ENCODE measurements at regions of chr17 and their contacts with region 1.

Region 1: GRCh38 chr17:46193626-46194392 is 580 bp upstream of the KANSL1 start:
- DNase-seq: peak; percentile 90 to 96 (median 95)
- H3K4me3 ChIP-seq: peak overlapping the region; percentile 71
- H3K4me3 Mint-ChIP-seq: peak overlapping the region; percentile 79 to 94 (median 90)
- H3K27ac ChIP-seq: peak overlapping the region; percentile 96
- H3K27ac Mint-ChIP-seq: peak overlapping the region; percentile 92 to 99 (median 98)
- H3K4me1 ChIP-seq: peaks cover 65% of the 10 kb centered on the region
- H3K4me1 Mint-ChIP-seq: peaks cover 52 to 72% (median 66%) of the 10 kb centered on the region in 3 donors
- H3K27me3 ChIP-seq: no peaks in the 10 kb centered on the region
- H3K27me3 Mint-ChIP-seq: no peaks in the 10 kb centered on the region

Region 2: GRCh38 chr17:46044286-46044928 is 149.4 kb before region 1 on chr17:
- CTCF ChIA-PET with region 1: interaction called, 12 read pairs
- POLR2A ChIA-PET with region 1: interaction called, 17 read pairs
- DNase-seq: peak; percentile 28 to 61 (median 32)
- H3K4me3 ChIP-seq: no peak overlapping the region
- H3K4me3 Mint-ChIP-seq: no peak overlapping the region
- H3K27ac ChIP-seq: no peak overlapping the region
- H3K27ac Mint-ChIP-seq: peak overlapping the region; percentile 5 to 89 (median 62)
- H3K4me1 ChIP-seq: no peaks in the 10 kb centered on the region
- H3K4me1 Mint-ChIP-seq: peaks cover 22 to 27% (median 25%) of the 10 kb centered on the region in 3 donors
- H3K27me3 ChIP-seq: no peaks in the 10 kb centered on the region
- H3K27me3 Mint-ChIP-seq: peaks cover 0 to under 1% of the 10 kb centered on the region in 2 donors

Region 3: GRCh38 chr17:46121841-46122485 is 71.8 kb before region 1 on chr17:
- CTCF ChIA-PET with region 1: no interaction called
- POLR2A ChIA-PET with region 1: no interaction called
- DNase-seq: no peak
- H3K4me3 ChIP-seq: no peak overlapping the region
- H3K4me3 Mint-ChIP-seq: peak overlapping the region in 6 of 7 donors; percentile 38 to 71 (median 56)
- H3K27ac ChIP-seq: no peak overlapping the region
- H3K27ac Mint-ChIP-seq: peak overlapping the region; percentile 42 to 92 (median 76)
- H3K4me1 ChIP-seq: peaks cover 84% of the 10 kb centered on the region
- H3K4me1 Mint-ChIP-seq: peaks cover 82 to 97% (median 93%) of the 10 kb centered on the region in 3 donors
- H3K27me3 ChIP-seq: no peaks in the 10 kb centered on the region
- H3K27me3 Mint-ChIP-seq: no peaks in the 10 kb centered on the region

Region 4: DNA sequence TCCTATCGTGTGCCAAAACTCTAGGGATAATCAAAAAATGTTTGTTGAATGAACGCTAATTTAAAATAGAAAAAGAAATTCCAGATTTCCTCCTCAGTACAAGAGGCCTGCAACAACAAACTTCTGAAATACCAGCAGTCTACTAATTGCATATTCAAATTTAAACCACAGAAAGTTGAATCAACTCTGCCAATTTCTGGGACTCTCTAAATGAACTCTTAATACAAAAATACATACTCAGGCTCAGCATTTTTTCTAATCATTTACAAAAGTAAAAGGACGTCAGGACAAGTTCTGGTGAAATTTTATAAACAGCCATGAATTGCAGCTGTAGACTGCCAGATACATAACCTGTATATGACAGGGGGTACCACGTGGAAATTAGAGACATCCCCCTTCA is 49.6 kb before region 1 on chr17:
- CTCF ChIA-PET with region 1: interaction called, 12 read pairs
- POLR2A ChIA-PET with region 1: interaction called, 12 read pairs
- DNase-seq: no peak
- H3K4me3 ChIP-seq: no peak overlapping the region
- H3K4me3 Mint-ChIP-seq: peak overlapping the region in 4 of 7 donors; percentile 12 to 44 (median 32)
- H3K27ac ChIP-seq: no peak overlapping the region
- H3K27ac Mint-ChIP-seq: peak overlapping the region in 7 of 8 donors; percentile 7 to 76 (median 32)
- H3K4me1 ChIP-seq: peaks cover 94% of the 10 kb centered on the region
- H3K4me1 Mint-ChIP-seq: peaks cover 86 to 96% (median 96%) of the 10 kb centered on the region in 3 donors
- H3K27me3 ChIP-seq: no peaks in the 10 kb centered on the region
- H3K27me3 Mint-ChIP-seq: no peaks in the 10 kb centered on the region

Region 5: DNA sequence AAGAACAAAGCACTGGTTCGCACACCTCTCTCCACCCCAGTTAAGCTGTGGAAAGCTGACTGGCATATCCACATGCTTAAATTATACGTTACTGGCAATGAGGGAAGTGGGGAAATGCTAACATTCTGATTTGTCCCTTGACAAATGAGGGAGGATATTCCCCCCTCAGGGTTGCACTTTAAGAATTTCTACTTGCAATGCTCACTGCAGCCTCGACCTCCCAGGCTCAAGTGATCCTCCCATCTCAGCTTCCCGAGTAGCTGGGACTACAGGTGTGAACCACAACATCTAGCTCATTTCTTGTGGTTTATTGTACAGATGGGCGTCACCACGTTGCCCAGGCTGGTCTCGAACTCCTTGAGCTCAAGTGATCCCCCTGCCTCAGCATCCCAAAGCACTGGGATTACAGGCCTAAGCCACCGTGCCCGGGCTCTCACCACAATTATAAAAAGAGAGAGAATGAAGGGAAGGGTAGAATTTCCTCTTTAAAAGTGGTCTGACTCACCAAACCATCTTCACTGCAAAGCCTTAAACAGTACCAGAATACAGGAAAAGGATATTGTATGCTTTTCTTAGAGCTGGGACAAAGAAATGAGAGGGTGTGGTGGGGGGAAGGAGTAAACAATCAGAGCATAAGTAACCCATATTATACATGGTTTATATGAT is 39.5 kb before region 1 on chr17:
- CTCF ChIA-PET with region 1: interaction called, 13 read pairs
- POLR2A ChIA-PET with region 1: interaction called, 12 read pairs
- DNase-seq: peak in 2 of 5 donors; percentile 14 to 26
- H3K4me3 ChIP-seq: peak overlapping the region; percentile 3
- H3K4me3 Mint-ChIP-seq: peak overlapping the region; percentile 31 to 88 (median 71)
- H3K27ac ChIP-seq: no peak overlapping the region
- H3K27ac Mint-ChIP-seq: peak overlapping the region; percentile 34 to 91 (median 85)
- H3K4me1 ChIP-seq: peaks cover 97% of the 10 kb centered on the region
- H3K4me1 Mint-ChIP-seq: peaks cover 85 to 95% (median 95%) of the 10 kb centered on the region in 3 donors
- H3K27me3 ChIP-seq: no peaks in the 10 kb centered on the region
- H3K27me3 Mint-ChIP-seq: no peaks in the 10 kb centered on the region

Region 6: DNA sequence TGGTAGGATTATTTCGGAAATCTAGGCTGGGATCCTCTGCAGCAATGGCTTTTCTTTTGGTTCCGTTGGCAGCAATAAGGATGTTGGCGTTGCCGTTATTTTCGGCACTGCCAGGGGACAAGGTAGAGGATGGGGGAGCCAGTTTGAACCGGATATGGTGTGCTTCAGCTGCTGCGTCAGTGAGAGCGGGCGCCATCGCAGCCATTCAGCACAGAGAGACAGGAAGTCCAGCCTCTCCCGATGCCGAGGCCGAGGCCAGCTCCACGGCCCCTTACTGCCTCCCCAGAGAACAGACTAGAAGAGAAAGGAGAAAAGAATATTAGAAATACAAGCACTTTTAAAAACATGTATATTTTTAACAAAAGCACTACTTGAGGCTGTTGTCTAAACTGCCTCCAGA is 21.9 kb before region 1 on chr17:
- CTCF ChIA-PET with region 1: interaction called, 12 read pairs
- POLR2A ChIA-PET with region 1: interaction called, 3 read pairs
- DNase-seq: peak in 2 of 5 donors; percentile 44 to 57
- H3K4me3 ChIP-seq: no peak overlapping the region
- H3K4me3 Mint-ChIP-seq: peak overlapping the region; percentile 56 to 75 (median 71)
- H3K27ac ChIP-seq: no peak overlapping the region
- H3K27ac Mint-ChIP-seq: peak overlapping the region; percentile 48 to 97 (median 92)
- H3K4me1 ChIP-seq: peaks cover 86% of the 10 kb centered on the region
- H3K4me1 Mint-ChIP-seq: peaks cover 75 to 99% (median 93%) of the 10 kb centered on the region in 3 donors
- H3K27me3 ChIP-seq: no peaks in the 10 kb centered on the region
- H3K27me3 Mint-ChIP-seq: no peaks in the 10 kb centered on the region

Region 7: GRCh38 chr17:46178550-46179214 is 15.1 kb before region 1 on chr17:
- CTCF ChIA-PET with region 1: interaction called, 12 read pairs
- POLR2A ChIA-PET with region 1: interaction called, 14 read pairs
- DNase-seq: no peak
- H3K4me3 ChIP-seq: no peak overlapping the region
- H3K4me3 Mint-ChIP-seq: peak overlapping the region; percentile 8 to 71 (median 58)
- H3K27ac ChIP-seq: no peak overlapping the region
- H3K27ac Mint-ChIP-seq: peak overlapping the region; percentile 14 to 80 (median 64)
- H3K4me1 ChIP-seq: peaks cover 78% of the 10 kb centered on the region
- H3K4me1 Mint-ChIP-seq: peaks cover 72 to 98% (median 94%) of the 10 kb centered on the region in 3 donors
- H3K27me3 ChIP-seq: no peaks in the 10 kb centered on the region
- H3K27me3 Mint-ChIP-seq: no peaks in the 10 kb centered on the region